CD4-positive, alpha-beta T cell (primary cell): ENCODE measurements at regions of chr3 and their contacts with region 1.

Region 1: GRCh38 chr3:43180027-43180426 is 74.1 kb upstream of the POMGNT2 start:
- DNase-seq: peak in 11 of 14 experiments; percentile 14 to 87 (median 35)
- ATAC-seq: peak; percentile 86
- H3K4me3 ChIP-seq: peak overlapping the region; percentile 7
- H3K4me3 Mint-ChIP-seq: peak overlapping the region; percentile 71
- H3K27ac ChIP-seq: peak overlapping the region; percentile 49 to 77
- H3K27ac Mint-ChIP-seq: peak overlapping the region; percentile 91
- H3K4me1 ChIP-seq: peaks cover 54% of the 10 kb centered on the region
- H3K4me1 Mint-ChIP-seq: peaks cover 67% of the 10 kb centered on the region
- H3K27me3 ChIP-seq: no peaks in the 10 kb centered on the region
- H3K27me3 Mint-ChIP-seq: no peaks in the 10 kb centered on the region
- CTCF ChIP-seq: no peak

Region 2: GRCh38 chr3:43169987-43170386 is 10.0 kb before region 1 on chr3:
- CTCF ChIA-PET with region 1: interaction called, 3 read pairs
- POLR2A ChIA-PET with region 1: interaction called, 16 read pairs
- intact Hi-C with region 1: no loop called
- DNase-seq: no peak
- ATAC-seq: no peak
- H3K4me3 ChIP-seq: no peak overlapping the region
- H3K4me3 Mint-ChIP-seq: no peak overlapping the region
- H3K27ac ChIP-seq: no peak overlapping the region
- H3K27ac Mint-ChIP-seq: no peak overlapping the region
- H3K4me1 ChIP-seq: no peaks in the 10 kb centered on the region
- H3K4me1 Mint-ChIP-seq: no peaks in the 10 kb centered on the region
- H3K27me3 ChIP-seq: no peaks in the 10 kb centered on the region
- H3K27me3 Mint-ChIP-seq: no peaks in the 10 kb centered on the region
- CTCF ChIP-seq: no peak

Region 3: GRCh38 chr3:43190666-43191065 is 10.6 kb after region 1 on chr3:
- CTCF ChIA-PET with region 1: no interaction called
- POLR2A ChIA-PET with region 1: interaction called, 21 read pairs
- intact Hi-C with region 1: loop called in 1 of 2 experiments (anchors 2 kb)
- DNase-seq: no peak
- ATAC-seq: no peak
- H3K4me3 ChIP-seq: no peak overlapping the region
- H3K4me3 Mint-ChIP-seq: no peak overlapping the region
- H3K27ac ChIP-seq: no peak overlapping the region
- H3K27ac Mint-ChIP-seq: no peak overlapping the region
- H3K4me1 ChIP-seq: peaks cover 47% of the 10 kb centered on the region
- H3K4me1 Mint-ChIP-seq: peaks cover 62% of the 10 kb centered on the region
- H3K27me3 ChIP-seq: no peaks in the 10 kb centered on the region
- H3K27me3 Mint-ChIP-seq: no peaks in the 10 kb centered on the region
- CTCF ChIP-seq: no peak

Region 4: DNA sequence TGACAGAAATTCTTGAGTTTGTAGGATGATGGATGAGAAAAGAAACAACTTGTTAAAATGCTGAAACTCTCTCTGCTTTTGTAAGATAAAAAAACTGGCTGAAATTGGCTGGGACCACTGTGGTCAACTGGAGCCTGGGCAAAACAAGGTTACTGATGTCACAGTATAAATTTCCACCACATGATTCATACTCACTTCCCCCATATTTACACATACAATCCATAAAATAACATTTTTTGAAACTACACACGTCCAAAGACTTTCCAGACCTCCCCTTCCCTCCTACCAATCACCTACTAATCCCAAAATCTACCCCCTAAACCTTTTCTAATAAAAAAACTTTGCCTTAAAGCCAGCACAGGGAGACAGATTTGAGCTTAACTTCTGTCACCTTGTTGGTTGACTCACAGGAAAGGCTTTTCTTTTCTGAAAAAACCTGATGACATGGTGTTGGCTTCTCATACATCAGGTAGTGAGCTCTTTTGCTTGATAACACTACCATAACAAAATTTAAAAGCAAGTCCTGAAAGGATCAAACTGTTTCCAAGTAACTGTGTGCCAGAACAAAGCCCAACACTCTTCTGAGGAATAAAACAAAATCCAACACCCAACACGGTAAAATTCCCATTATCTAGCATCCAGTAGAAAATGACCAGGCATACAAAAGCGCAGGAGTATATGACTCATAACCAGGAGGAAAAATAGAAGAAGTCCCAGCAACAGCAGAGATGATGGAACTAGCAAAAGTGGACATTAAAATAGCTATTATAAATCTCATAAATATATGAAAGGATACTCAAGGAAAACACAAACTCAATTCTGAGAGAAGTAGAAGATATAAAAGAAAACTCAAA is 19.0 kb after region 1 on chr3:
- CTCF ChIA-PET with region 1: no interaction called
- POLR2A ChIA-PET with region 1: interaction called, 13 read pairs
- intact Hi-C with region 1: loop called in 1 of 2 experiments (anchors 2 kb)
- DNase-seq: no peak
- ATAC-seq: no peak
- H3K4me3 ChIP-seq: no peak overlapping the region
- H3K4me3 Mint-ChIP-seq: peak overlapping the region; percentile 47
- H3K27ac ChIP-seq: no peak overlapping the region
- H3K27ac Mint-ChIP-seq: peak overlapping the region; percentile 43
- H3K4me1 ChIP-seq: peaks cover 32% of the 10 kb centered on the region
- H3K4me1 Mint-ChIP-seq: peaks cover 59% of the 10 kb centered on the region
- H3K27me3 ChIP-seq: no peaks in the 10 kb centered on the region
- H3K27me3 Mint-ChIP-seq: no peaks in the 10 kb centered on the region
- CTCF ChIP-seq: no peak

Region 5: GRCh38 chr3:43223670-43224364 is 43.8 kb after region 1 on chr3:
- CTCF ChIA-PET with region 1: no interaction called
- POLR2A ChIA-PET with region 1: interaction called, 5 read pairs
- intact Hi-C with region 1: loop called in 1 of 2 experiments (anchors 5 kb)
- DNase-seq: peak in 3 of 14 experiments; percentile 49 to 56 (median 52)
- ATAC-seq: no peak
- H3K4me3 ChIP-seq: no peak overlapping the region
- H3K4me3 Mint-ChIP-seq: peak overlapping the region; percentile 2
- H3K27ac ChIP-seq: no peak overlapping the region
- H3K27ac Mint-ChIP-seq: peak overlapping the region; percentile 86
- H3K4me1 ChIP-seq: peaks cover 28% of the 10 kb centered on the region
- H3K4me1 Mint-ChIP-seq: peaks cover 60% of the 10 kb centered on the region
- H3K27me3 ChIP-seq: no peaks in the 10 kb centered on the region
- H3K27me3 Mint-ChIP-seq: no peaks in the 10 kb centered on the region
- CTCF ChIP-seq: peak; percentile 65